ENCODE measurements at regions of chr5 and their contacts with region 1.

Region 1: GRCh38 chr5:181260387-181261319 is at the start of gene TRIM52:
- DNase-seq: peak; percentile 84 to 95 (median 88)
- ATAC-seq: peak; percentile 82 to 83
- H3K4me3 Mint-ChIP-seq: peak within 1 kb of the TSS; percentile 88 to 99 (median 98)
- H3K27ac Mint-ChIP-seq: peak within 1 kb of the TSS; percentile 93 to 99 (median 98)
- H3K4me1 Mint-ChIP-seq: peaks cover 33 to 55% (median 53%) of the 10 kb centered on the region in 4 donors
- H3K27me3 Mint-ChIP-seq: no peaks in the 10 kb centered on the region
- polyA plus RNA-seq, gene TRIM52: 23.6 to 36.3 (median 32.8) TPM

Region 2: DNA sequence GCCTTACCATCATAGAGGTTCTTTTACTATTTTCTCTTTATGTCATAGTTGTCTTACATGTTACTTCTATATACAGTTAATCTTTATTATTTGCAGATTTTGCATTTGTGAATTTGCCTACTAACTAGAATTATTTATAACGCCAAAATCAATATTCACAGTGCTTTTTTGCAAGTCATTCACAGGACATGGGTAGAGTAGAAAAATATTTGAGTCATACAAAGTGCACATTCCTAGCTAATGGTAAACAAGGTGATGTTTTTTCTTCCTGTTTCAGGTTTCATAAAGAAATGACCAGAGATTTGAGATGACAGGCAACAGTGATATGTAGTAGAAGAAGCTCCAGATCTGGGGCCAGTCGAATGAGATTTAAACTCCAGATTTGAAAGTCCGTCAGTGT is 490.8 kb before region 1 on chr5:
- POLR2A ChIA-PET with region 1: no interaction called
- DNase-seq: no peak
- ATAC-seq: no peak
- H3K4me3 Mint-ChIP-seq: no peak overlapping the region
- H3K27ac Mint-ChIP-seq: no peak overlapping the region
- H3K4me1 Mint-ChIP-seq: no peaks in the 10 kb centered on the region
- H3K27me3 Mint-ChIP-seq: peaks cover 2 to 25% (median 8%) of the 10 kb centered on the region in 5 donors

Region 3: DNA sequence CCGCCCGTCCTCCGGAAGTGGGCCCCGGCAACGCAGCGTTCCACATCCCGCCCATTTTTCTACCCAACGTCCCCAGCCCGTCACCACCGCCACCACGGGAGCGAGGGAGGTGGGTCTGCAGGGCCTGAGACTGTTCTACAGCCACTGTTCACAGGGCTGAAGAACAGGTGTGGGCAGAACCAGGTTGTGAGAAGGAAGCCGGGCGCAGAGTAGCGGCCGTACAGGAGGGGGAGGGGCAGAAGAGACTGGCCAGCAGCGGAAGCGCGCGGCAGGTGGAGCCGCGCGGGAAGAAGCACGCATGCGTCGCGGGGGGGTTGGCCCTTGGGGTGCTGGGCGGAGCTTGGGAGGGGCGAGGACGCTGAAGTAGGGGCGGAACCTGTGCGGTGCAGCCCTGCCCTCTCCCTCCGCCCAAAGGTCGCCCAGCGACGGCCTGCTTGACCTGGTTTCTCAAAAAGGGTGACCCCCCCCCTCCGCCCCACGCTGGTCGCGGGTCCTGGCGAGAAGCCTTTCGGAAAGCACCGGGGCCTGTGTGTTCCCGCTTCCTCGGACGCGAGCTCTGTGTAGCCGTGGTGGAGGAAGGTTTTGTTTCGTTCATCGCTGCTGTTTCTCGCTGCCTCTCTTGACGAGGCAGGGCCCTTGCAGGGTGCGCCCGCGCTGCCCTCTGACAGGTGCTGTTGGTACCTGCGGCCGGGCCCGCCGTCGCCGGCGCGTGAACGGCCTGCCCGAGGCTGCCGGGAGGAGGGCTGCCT is 450.3 kb before region 1 on chr5:
- POLR2A ChIA-PET with region 1: interaction called, 16 read pairs
- DNase-seq: peak; percentile 88 to 100 (median 96)
- ATAC-seq: peak; percentile 72 to 74
- H3K4me3 Mint-ChIP-seq: peak overlapping the region; percentile 83 to 99 (median 92)
- H3K27ac Mint-ChIP-seq: peak overlapping the region; percentile 93 to 100 (median 100)
- H3K4me1 Mint-ChIP-seq: peaks cover 47 to 84% (median 75%) of the 10 kb centered on the region in 4 donors
- H3K27me3 Mint-ChIP-seq: no peaks in the 10 kb centered on the region

Region 4: GRCh38 chr5:181142054-181142453 is 118.6 kb before region 1 on chr5:
- POLR2A ChIA-PET with region 1: no interaction called
- DNase-seq: no peak
- ATAC-seq: no peak
- H3K4me3 Mint-ChIP-seq: no peak overlapping the region
- H3K27ac Mint-ChIP-seq: no peak overlapping the region
- H3K4me1 Mint-ChIP-seq: no peaks in the 10 kb centered on the region
- H3K27me3 Mint-ChIP-seq: peaks cover 29 to 48% (median 36%) of the 10 kb centered on the region in 5 donors

Region 5: GRCh38 chr5:181181650-181182565 is 78.7 kb before region 1 on chr5:
- POLR2A ChIA-PET with region 1: interaction called, 137 read pairs
- DNase-seq: peak in 9 of 10 donors; percentile 50 to 83 (median 64)
- ATAC-seq: peak; percentile 45 to 70
- H3K4me3 Mint-ChIP-seq: peak overlapping the region in 8 of 10 donors; percentile 66 to 91 (median 86)
- H3K27ac Mint-ChIP-seq: peak overlapping the region in 8 of 10 donors; percentile 53 to 95 (median 86)
- H3K4me1 Mint-ChIP-seq: peaks cover 6 to 38% (median 26%) of the 10 kb centered on the region in 4 donors
- H3K27me3 Mint-ChIP-seq: peaks cover 0 to 2% (median 0%) of the 10 kb centered on the region in 5 donors

Region 6: GRCh38 chr5:181207214-181208107 is 53.2 kb before region 1 on chr5:
- POLR2A ChIA-PET with region 1: interaction called, 51 read pairs
- DNase-seq: peak in 9 of 10 donors; percentile 54 to 88 (median 78)
- ATAC-seq: peak; percentile 59 to 74
- H3K4me3 Mint-ChIP-seq: peak overlapping the region; percentile 87 to 98 (median 93)
- H3K27ac Mint-ChIP-seq: peak overlapping the region; percentile 90 to 100 (median 92)
- H3K4me1 Mint-ChIP-seq: peaks cover 27 to 58% (median 34%) of the 10 kb centered on the region in 4 donors
- H3K27me3 Mint-ChIP-seq: peaks cover 4 to 20% (median 11%) of the 10 kb centered on the region in 5 donors

Region 7: DNA sequence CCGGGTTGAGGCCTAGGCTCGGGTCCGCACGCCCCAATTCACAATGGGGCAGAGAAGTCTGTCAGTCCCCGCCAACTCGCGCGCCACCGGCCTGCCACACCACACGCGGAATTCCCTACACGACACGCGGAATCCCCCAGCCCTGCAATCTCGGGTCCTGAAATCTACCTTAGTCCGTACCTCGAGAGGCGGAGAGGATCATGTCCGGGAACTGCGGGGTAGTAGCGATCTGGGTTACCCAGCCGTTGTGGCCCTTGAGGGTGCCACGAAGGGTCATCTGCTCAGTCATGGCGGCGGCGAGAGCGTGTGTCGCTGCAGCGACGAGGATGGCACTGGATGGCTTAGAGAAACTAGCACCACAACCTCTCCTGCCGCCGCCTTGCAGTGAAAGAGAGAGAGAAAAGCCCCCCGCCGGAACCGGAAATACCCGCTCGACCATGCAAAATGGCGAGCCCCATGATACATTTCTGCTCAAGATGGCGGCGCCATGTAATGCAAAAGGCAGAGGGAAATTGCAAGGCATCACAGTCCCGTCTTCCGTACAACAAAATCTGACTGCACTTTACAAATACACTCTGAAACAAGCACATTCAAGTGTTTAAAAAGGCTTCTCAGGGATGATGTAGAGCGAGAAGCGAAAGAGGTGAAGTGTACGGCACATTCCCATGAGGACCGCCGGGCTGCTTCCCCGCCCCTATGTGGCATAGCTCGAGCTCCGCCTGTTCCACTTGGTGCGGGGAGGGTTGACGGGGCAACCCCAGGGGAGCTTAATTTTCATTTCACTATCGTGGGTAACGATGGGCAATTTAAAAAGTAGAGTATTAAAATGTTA is 16.9 kb before region 1 on chr5 and contains the start of gene RACK1:
- POLR2A ChIA-PET with region 1: interaction called, 284 read pairs
- DNase-seq: peak; percentile 76 to 96 (median 89)
- ATAC-seq: peak; percentile 76 to 79
- H3K4me3 Mint-ChIP-seq: peak within 1 kb of the TSS; percentile 96 to 100 (median 99)
- H3K27ac Mint-ChIP-seq: peak within 1 kb of the TSS; percentile 94 to 99 (median 98)
- H3K4me1 Mint-ChIP-seq: peaks cover 35 to 78% (median 74%) of the 10 kb centered on the region in 4 donors
- H3K27me3 Mint-ChIP-seq: no peaks in the 10 kb centered on the region
- polyA plus RNA-seq, gene RACK1: 2,449 to 2,566 (median 2,565) TPM

Measured in naive thymus-derived CD8-positive, alpha-beta T cell (primary cell).